ENCODE measurements at regions of chr14 and their contacts with region 1.

Region 1: GRCh38 chr14:24241829-24242443 is 487 bp downstream of the TINF2 start:
- DNase-seq: peak; percentile 96
- ATAC-seq: peak; percentile 83
- H3K4me3 Mint-ChIP-seq: peak overlapping the region; percentile 96
- H3K27ac Mint-ChIP-seq: peak overlapping the region; percentile 100
- H3K4me1 Mint-ChIP-seq: peaks cover 59% of the 10 kb centered on the region
- H3K27me3 Mint-ChIP-seq: no peaks in the 10 kb centered on the region

Region 2: GRCh38 chr14:23916004-23916403 is 325.9 kb before region 1 on chr14:
- CTCF ChIA-PET with region 1: no interaction called
- DNase-seq: no peak
- ATAC-seq: no peak
- H3K4me3 Mint-ChIP-seq: no peak overlapping the region
- H3K27ac Mint-ChIP-seq: no peak overlapping the region
- H3K4me1 Mint-ChIP-seq: no peaks in the 10 kb centered on the region
- H3K27me3 Mint-ChIP-seq: peaks cover 12% of the 10 kb centered on the region

Region 3: GRCh38 chr14:24108336-24108874 is 133.5 kb before region 1 on chr14:
- CTCF ChIA-PET with region 1: interaction called, 13 read pairs
- DNase-seq: no peak
- ATAC-seq: no peak
- H3K4me3 Mint-ChIP-seq: peak overlapping the region; percentile 17
- H3K27ac Mint-ChIP-seq: peak overlapping the region; percentile 98
- H3K4me1 Mint-ChIP-seq: peaks cover 36% of the 10 kb centered on the region
- H3K27me3 Mint-ChIP-seq: no peaks in the 10 kb centered on the region

Region 4: GRCh38 chr14:24195191-24196070 is 46.5 kb before region 1 on chr14 and contains the start of gene TM9SF1:
- CTCF ChIA-PET with region 1: interaction called, 11 read pairs
- DNase-seq: peak; percentile 93
- ATAC-seq: peak; percentile 92
- H3K4me3 Mint-ChIP-seq: peak within 1 kb of the TSS; percentile 89
- H3K27ac Mint-ChIP-seq: peak within 1 kb of the TSS; percentile 95
- H3K4me1 Mint-ChIP-seq: peaks cover 56% of the 10 kb centered on the region
- H3K27me3 Mint-ChIP-seq: no peaks in the 10 kb centered on the region
- total RNA-seq, gene TM9SF1: 26.7 to 32.8 TPM

Region 5: GRCh38 chr14:24206260-24207103 is 35.5 kb before region 1 on chr14:
- CTCF ChIA-PET with region 1: no interaction called
- DNase-seq: no peak
- ATAC-seq: no peak
- H3K4me3 Mint-ChIP-seq: no peak overlapping the region
- H3K27ac Mint-ChIP-seq: no peak overlapping the region
- H3K4me1 Mint-ChIP-seq: peaks cover 14% of the 10 kb centered on the region
- H3K27me3 Mint-ChIP-seq: no peaks in the 10 kb centered on the region

Region 6: DNA sequence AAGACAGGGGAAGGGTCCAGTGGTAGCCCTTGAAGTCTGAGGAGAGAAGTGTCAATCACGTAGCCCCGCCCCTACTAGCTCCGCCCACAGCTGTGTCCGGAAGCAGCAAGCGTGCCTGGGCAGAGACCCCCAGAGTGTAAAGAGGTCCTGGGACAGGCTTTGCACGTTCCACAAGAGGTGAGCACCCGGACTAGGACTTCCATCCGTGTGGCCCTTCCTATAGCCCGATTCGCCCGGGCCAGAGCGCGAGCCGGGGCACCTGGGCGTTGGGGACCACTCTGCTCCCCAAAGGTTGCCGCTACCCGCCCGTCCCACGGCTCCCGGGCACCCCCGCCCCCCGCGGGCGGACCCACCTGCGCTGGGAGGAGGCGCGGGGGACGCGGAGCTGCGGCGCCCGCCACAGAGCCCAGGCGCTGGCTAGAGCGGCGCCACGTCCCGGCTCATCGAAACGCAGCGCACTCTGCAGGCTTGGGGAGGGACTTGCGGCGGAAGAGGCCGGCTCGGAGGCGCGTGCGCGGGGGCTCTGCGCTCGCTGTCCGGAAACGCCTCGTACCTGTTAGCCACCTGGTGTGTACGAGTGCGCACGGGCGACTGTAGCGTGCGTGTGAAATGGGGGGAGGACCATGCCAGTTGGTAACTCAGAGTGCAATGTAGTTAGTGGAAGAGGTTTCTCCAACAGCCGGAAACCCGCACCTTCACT is 29.3 kb after region 1 on chr14 and contains the start of gene RABGGTA:
- CTCF ChIA-PET with region 1: interaction called, 275 read pairs
- DNase-seq: peak; percentile 92
- ATAC-seq: peak; percentile 92
- H3K4me3 Mint-ChIP-seq: peak within 1 kb of the TSS; percentile 84
- H3K27ac Mint-ChIP-seq: peak within 1 kb of the TSS; percentile 93
- H3K4me1 Mint-ChIP-seq: peaks cover 41% of the 10 kb centered on the region
- H3K27me3 Mint-ChIP-seq: no peaks in the 10 kb centered on the region
- total RNA-seq, gene RABGGTA: 34.3 to 44.6 TPM

Region 7: GRCh38 chr14:24442273-24443052 is 200.5 kb after region 1 on chr14 and contains the start of gene SDR39U1:
- CTCF ChIA-PET with region 1: interaction called, 13 read pairs
- DNase-seq: peak; percentile 99
- ATAC-seq: peak; percentile 94
- H3K4me3 Mint-ChIP-seq: peak within 1 kb of the TSS; percentile 90
- H3K27ac Mint-ChIP-seq: peak within 1 kb of the TSS; percentile 98
- H3K4me1 Mint-ChIP-seq: peaks cover 53% of the 10 kb centered on the region
- H3K27me3 Mint-ChIP-seq: peaks cover 2% of the 10 kb centered on the region
- total RNA-seq, gene SDR39U1: 45.6 to 45.9 TPM